Astrocyte of the cerebellum (primary cell): ENCODE measurements at regions of chr11 and their contacts with region 1.

Region 1: DNA sequence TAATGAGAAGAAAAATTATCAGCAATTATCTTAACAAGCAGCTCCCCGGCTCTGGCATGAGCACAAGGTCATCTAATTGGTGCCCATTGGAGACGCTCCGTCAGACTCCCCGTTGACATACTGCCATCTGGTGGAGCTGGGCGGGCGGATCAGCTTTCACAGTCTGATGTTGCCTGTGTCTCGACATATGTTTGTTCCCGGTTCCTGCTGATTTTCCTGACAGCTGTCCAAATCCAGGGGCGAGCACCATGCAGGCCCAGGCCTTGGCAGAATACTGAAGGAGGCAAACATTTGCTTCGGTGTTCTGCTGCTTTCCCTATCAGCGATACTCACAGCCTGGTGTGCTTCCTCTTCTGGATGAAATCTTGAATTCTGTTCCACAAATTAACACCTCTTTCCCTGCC is 43.8 kb upstream of the BARX2 start:
- DNase-seq: peak; percentile 57
- H3K4me3 ChIP-seq: no peak overlapping the region
- CTCF ChIP-seq: peak; percentile 86

Region 2: DNA sequence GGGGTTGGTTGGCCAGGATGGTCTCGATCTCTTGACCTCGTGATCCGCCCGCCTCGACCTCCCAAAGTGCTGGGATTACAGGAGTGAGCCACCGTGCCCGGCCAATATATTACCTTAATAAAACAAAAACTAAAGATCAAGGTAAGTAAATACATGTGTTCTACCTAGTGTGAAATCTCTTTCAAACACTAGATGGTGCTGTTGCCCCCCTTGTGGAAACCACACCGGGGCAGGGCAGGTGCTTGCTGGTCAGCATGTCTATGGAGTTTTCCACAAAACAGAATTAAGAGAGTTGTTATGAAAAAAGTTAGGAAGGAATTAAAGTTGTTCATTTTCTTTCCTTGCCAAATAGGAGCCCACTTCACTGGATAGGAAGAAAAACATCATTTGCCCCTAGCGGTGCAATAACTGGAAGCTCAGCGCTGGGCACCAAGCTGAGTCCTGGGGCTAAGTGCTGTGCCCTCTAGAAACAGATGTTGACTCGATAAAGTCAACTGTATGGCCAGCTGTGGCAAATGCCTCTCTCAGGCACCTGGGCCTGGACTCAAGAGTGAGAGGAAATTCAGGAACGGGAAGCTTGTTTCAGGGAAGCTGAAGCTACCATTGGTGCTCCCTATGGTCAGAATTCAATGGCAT is 447.1 kb before region 1 on chr11:
- in situ Hi-C with region 1: loop called (anchors 25 kb)
- DNase-seq: peak; percentile 49
- H3K4me3 ChIP-seq: no peak overlapping the region
- CTCF ChIP-seq: peak; percentile 74

Region 3: GRCh38 chr11:129143335-129143734 is 188.5 kb before region 1 on chr11:
- in situ Hi-C with region 1: loop called (anchors 25 kb)
- DNase-seq: peak; percentile 97
- H3K4me3 ChIP-seq: no peak overlapping the region
- CTCF ChIP-seq: no peak

Region 4: GRCh38 chr11:129709801-129710398 is 378.0 kb after region 1 on chr11:
- in situ Hi-C with region 1: no loop called
- DNase-seq: no peak
- H3K4me3 ChIP-seq: no peak overlapping the region
- CTCF ChIP-seq: no peak